ENCODE measurements at regions of chr10 and their contacts with region 1.

Region 1: DNA sequence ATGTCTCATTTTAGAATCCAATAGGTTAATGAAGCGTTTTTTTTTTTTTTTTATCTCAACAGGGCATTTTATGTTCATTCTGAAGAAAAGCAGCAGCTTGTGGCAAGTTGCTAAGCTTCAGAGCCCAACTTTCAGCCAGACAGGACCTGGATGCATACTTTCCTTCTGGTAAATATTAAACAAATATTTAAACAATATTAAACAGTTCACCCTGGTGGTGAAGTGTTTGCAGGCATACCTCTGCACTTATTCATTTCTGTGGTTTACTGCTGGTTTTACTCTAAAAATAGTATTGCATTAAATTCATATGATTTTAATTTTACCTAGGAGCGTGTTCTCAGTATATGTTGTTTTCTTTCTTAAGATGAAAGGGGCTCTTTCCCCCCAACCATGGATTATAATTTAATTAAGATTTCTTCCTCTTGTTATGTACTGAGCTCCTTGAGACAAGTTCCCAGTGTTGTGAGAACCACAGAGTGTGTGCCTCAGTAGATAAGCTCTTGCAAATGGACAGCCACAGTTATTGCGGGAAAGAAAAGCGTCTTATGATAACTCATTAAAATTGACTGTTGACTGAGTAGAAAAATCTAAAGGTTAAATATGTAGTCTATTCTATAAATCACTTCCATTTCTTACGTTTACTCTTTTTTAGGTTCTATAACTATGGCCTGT is 155.8 kb downstream of the MALRD1 start:
- DNase-seq: no peak
- ATAC-seq: no peak
- H3K4me3 Mint-ChIP-seq: no peak overlapping the region
- H3K27ac Mint-ChIP-seq: no peak overlapping the region
- H3K4me1 Mint-ChIP-seq: no peaks in the 10 kb centered on the region
- H3K27me3 Mint-ChIP-seq: no peaks in the 10 kb centered on the region

Region 2: DNA sequence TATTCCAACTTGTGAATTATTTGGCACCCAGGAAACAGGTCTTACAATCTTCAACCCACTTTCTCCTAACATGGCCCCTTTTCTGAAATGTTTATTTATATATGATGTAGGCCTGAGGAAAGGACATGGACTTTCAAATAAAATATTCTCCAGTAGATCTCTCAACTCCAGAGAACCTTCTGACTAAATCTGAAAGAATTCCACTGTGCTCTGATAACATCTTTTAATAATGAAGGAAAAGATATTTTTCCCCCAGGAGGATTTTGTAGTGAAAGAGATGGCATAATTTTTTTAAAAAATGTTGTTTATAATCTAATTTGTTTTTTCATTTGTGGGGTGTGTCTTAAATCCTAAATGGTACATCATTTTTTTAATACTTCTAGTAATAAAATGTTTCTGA is 16.4 kb after region 1 on chr10:
- CTCF ChIA-PET with region 1: no interaction called
- POLR2A ChIA-PET with region 1: no interaction called
- intact Hi-C with region 1: loop called in 1 of 2 experiments (anchors 1 kb)
- DNase-seq: no peak
- ATAC-seq: no peak
- H3K4me3 Mint-ChIP-seq: no peak overlapping the region
- H3K27ac Mint-ChIP-seq: no peak overlapping the region
- H3K4me1 Mint-ChIP-seq: no peaks in the 10 kb centered on the region
- H3K27me3 Mint-ChIP-seq: no peaks in the 10 kb centered on the region

Measured in activated CD4-positive, alpha-beta T cell treated with anti-CD3 and anti-CD28 coated beads for 36 hours (primary cell).